Activated B cell treated with CpG ODN at 0.5 μM for 24 hours (primary cell): ENCODE measurements at regions of chr1 and their contacts with region 1.

Region 1: DNA sequence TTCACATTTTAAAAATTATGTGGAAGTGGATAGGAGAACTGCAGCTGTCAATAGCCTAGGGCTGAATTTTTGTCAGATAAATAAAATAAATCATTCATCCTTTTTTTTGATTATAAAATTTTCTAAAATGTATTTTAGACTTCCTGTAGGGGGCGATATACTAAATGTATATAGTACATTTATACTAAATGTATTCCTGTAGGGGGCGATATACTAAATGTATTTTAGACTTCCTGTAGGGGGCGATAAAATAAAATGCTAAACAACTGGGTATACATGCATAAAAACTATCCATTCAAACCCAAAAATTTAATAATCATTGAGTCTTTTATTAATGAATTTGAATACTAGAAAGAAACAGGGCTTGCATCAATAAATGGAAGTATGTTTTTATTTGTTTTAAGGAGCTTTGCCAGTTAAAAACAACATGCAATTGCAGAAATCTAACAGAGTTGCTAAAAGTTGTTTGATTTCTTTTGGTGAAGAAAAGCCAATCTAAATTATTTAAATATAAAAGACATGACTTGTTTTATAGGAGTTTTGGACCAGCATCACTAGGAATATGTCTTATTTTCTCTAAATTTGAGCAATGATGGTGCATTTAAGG is 31.4 kb downstream of the CLCA1 start:
- DNase-seq: no peak
- ATAC-seq: peak; percentile 56
- H3K4me3 Mint-ChIP-seq: no peak overlapping the region
- H3K27ac Mint-ChIP-seq: no peak overlapping the region
- H3K4me1 Mint-ChIP-seq: peaks cover 2% of the 10 kb centered on the region
- H3K27me3 Mint-ChIP-seq: peaks cover 15% of the 10 kb centered on the region
- CTCF ChIP-seq: peak; percentile 100

Region 2: DNA sequence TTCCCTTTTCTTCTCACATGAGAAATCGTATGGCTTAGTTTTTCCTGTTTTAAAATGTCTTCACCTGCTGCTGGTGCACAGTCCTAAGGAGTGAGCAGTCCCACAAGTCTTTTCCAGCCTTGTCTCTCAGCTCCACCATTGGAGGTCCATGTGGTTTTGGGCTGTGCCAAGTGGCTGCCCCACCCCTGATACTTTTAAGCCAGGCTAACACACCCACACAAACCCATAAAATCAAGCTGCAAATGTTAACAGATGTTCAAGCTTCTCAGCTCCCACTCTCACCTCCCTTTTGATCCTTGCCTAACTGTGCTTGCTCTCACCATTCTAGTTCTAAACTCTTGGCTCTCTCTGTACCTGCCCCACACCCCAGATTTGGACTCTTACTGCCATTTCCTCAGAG is 269.0 kb before region 1 on chr1:
- CTCF ChIA-PET with region 1: no interaction called
- POLR2A ChIA-PET with region 1: no interaction called
- intact Hi-C with region 1: no loop called
- DNase-seq: no peak
- ATAC-seq: no peak
- H3K4me3 Mint-ChIP-seq: no peak overlapping the region
- H3K27ac Mint-ChIP-seq: no peak overlapping the region
- H3K4me1 Mint-ChIP-seq: no peaks in the 10 kb centered on the region
- H3K27me3 Mint-ChIP-seq: no peaks in the 10 kb centered on the region
- CTCF ChIP-seq: no peak

Region 3: DNA sequence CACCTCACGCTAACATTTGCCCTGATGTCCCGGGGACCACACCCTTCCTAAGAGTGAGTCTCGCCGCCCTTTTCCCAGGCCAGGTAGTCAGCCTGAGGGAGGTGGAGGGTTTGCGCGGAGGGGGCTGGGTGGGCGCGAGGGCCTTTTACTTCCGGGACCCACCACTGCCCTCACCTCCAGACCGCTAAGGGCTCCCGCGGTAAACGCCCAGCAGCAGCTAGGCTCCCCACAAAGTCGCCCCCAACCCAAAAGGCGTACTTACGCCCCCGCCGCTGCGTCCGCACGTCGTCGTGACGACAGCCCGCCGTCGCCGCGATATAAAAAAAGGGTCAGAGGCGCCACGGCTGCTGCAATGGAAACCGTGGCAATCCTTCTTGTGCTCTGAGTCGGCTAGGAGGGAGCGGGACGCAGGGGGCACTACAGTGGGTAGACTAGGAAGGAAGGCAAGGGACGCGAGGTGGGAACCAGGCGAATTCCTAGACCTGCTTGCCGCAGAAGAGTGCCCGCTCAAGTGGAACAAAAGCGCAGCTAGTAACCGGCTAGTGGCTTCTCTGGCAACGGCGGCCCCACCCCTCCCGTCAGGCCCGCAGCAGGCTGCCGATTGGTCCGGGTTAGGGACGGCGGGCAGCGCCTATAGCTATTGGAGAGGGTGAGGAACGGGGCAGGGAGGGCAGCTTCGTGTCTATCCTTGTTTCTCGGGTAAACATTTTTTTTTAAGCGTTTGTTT is 104.2 kb before region 1 on chr1 and contains the start of gene ODF2L:
- CTCF ChIA-PET with region 1: interaction called, 6 read pairs
- POLR2A ChIA-PET with region 1: no interaction called
- intact Hi-C with region 1: loop called (anchors 1 kb)
- DNase-seq: peak; percentile 78
- ATAC-seq: peak; percentile 99
- H3K4me3 Mint-ChIP-seq: peak within 1 kb of the TSS; percentile 98
- H3K27ac Mint-ChIP-seq: peak within 1 kb of the TSS; percentile 95
- H3K4me1 Mint-ChIP-seq: peaks cover 45% of the 10 kb centered on the region
- H3K27me3 Mint-ChIP-seq: no peaks in the 10 kb centered on the region
- CTCF ChIP-seq: no peak
- total RNA-seq, gene ODF2L: 28.2 and 36.1 TPM in 2 replicates

Region 4: GRCh38 chr1:86419277-86419903 is 80.7 kb before region 1 on chr1:
- CTCF ChIA-PET with region 1: interaction called, 4 read pairs
- POLR2A ChIA-PET with region 1: no interaction called
- intact Hi-C with region 1: loop called (anchors 1 kb)
- DNase-seq: no peak
- ATAC-seq: peak; percentile 81
- H3K4me3 Mint-ChIP-seq: peak overlapping the region; percentile 80
- H3K27ac Mint-ChIP-seq: peak overlapping the region; percentile 70
- H3K4me1 Mint-ChIP-seq: peaks cover 7% of the 10 kb centered on the region
- H3K27me3 Mint-ChIP-seq: peaks cover 3% of the 10 kb centered on the region
- CTCF ChIP-seq: no peak

Region 5: DNA sequence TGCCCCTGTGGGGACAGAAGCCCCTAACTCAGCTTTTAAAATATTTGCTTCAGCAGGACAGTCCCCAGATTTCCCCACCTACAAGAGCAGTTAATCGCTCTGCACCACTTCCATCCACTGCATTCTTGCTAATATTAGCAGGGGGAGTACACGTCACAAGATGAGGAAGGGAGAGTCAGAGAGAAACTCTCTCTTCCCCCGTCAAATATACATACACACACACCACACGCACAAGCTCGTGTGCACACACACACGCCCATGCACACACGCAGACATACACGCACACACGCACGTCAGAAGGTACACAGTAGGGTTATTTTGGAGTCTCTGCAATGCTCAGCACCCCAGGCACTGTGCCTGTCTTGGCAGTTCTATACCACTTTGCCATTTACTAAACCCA is 29.2 kb before region 1 on chr1:
- CTCF ChIA-PET with region 1: interaction called, 7 read pairs
- POLR2A ChIA-PET with region 1: no interaction called
- intact Hi-C with region 1: loop called (anchors 1 kb)
- DNase-seq: no peak
- ATAC-seq: peak; percentile 56
- H3K4me3 Mint-ChIP-seq: no peak overlapping the region
- H3K27ac Mint-ChIP-seq: peak overlapping the region; percentile 6
- H3K4me1 Mint-ChIP-seq: peaks cover 6% of the 10 kb centered on the region
- H3K27me3 Mint-ChIP-seq: peaks cover 18% of the 10 kb centered on the region
- CTCF ChIP-seq: no peak

Region 6: GRCh38 chr1:86542626-86543025 is 42.5 kb after region 1 on chr1:
- CTCF ChIA-PET with region 1: no interaction called
- POLR2A ChIA-PET with region 1: no interaction called
- intact Hi-C with region 1: no loop called
- DNase-seq: no peak
- ATAC-seq: no peak
- H3K4me3 Mint-ChIP-seq: no peak overlapping the region
- H3K27ac Mint-ChIP-seq: no peak overlapping the region
- H3K4me1 Mint-ChIP-seq: no peaks in the 10 kb centered on the region
- H3K27me3 Mint-ChIP-seq: peaks cover 14% of the 10 kb centered on the region
- CTCF ChIP-seq: no peak

Region 7: DNA sequence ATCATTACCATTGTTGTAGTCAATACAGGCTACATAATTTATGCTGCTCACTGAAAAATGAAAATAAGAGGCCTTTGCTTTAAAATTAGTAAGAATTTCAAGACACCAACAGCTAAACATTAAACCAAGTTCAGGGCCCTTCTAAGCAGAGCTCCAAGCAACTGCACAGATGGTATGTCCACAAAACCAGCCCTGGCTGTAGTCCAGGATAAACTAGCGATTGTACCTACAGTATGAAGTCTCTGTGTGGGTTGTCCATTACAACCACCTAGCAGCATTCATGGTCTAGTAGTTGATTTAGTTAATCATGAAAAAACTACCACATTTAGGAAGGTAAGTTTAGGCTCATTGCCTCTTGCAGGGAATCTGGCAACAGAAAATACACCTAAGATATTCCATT is 82.1 kb after region 1 on chr1:
- CTCF ChIA-PET with region 1: no interaction called
- POLR2A ChIA-PET with region 1: no interaction called
- intact Hi-C with region 1: no loop called
- DNase-seq: no peak
- ATAC-seq: no peak
- H3K4me3 Mint-ChIP-seq: no peak overlapping the region
- H3K27ac Mint-ChIP-seq: no peak overlapping the region
- H3K4me1 Mint-ChIP-seq: no peaks in the 10 kb centered on the region
- H3K27me3 Mint-ChIP-seq: no peaks in the 10 kb centered on the region
- CTCF ChIP-seq: no peak

Region 8: DNA sequence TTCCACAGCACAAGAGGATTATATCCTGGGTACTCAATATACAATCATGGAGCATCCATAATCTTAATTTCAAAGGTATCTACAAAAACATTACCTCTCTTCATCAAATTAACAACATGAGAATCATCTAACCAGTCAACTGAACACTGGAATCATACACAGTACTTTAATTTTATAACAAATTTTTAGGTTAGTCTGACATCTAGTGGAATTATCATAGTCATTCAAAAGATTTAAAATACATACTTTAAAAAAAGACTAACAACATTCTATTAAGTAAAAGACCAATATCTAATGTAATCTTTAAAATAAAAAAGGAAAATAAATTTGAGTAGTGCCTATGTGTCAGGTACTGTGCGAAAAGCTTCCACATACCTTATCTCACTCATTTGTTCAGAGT is 187.5 kb after region 1 on chr1:
- CTCF ChIA-PET with region 1: interaction called, 4 read pairs
- POLR2A ChIA-PET with region 1: no interaction called
- intact Hi-C with region 1: loop called (anchors 5 kb)
- DNase-seq: no peak
- ATAC-seq: peak; percentile 34
- H3K4me3 Mint-ChIP-seq: no peak overlapping the region
- H3K27ac Mint-ChIP-seq: no peak overlapping the region
- H3K4me1 Mint-ChIP-seq: no peaks in the 10 kb centered on the region
- H3K27me3 Mint-ChIP-seq: no peaks in the 10 kb centered on the region
- CTCF ChIP-seq: no peak

Region 9: DNA sequence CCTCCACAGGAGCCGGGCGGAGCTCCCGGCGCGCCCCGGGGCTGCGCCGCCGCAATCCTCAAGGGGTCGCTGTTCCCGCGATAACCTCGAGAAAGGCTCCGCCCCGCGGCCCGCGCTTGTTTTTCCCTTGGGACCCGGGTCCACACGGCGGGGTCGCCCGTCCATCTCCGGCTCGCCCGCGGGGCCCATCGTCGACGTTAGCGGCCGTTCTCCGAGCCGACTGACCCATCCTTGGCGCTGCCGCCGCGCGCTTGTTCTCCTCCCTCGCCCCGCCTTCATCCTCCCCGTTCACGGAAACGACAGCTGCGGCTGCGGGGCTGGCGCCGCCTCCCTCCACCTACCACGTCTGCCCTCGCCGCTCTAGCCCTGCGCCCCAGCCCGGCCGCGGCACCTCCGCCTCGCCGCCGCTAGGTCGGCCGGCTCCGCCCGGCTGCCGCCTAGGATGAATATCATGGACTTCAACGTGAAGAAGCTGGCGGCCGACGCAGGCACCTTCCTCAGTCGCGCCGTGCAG is 204.4 kb after region 1 on chr1 and contains the start of gene SH3GLB1:
- CTCF ChIA-PET with region 1: interaction called, 6 read pairs
- POLR2A ChIA-PET with region 1: no interaction called
- intact Hi-C with region 1: loop called (anchors 5 kb)
- DNase-seq: peak; percentile 92
- ATAC-seq: peak; percentile 87
- H3K4me3 Mint-ChIP-seq: peak within 1 kb of the TSS; percentile 99
- H3K27ac Mint-ChIP-seq: peak within 1 kb of the TSS; percentile 99
- H3K4me1 Mint-ChIP-seq: peaks cover 46% of the 10 kb centered on the region
- H3K27me3 Mint-ChIP-seq: no peaks in the 10 kb centered on the region
- CTCF ChIP-seq: peak; percentile 26
- total RNA-seq, gene SH3GLB1: 63.8 and 63.9 TPM in 2 replicates

Region 10: GRCh38 chr1:86741947-86742572 is 242.0 kb after region 1 on chr1:
- CTCF ChIA-PET with region 1: interaction called, 3 read pairs
- POLR2A ChIA-PET with region 1: no interaction called
- intact Hi-C with region 1: loop called (anchors 1 kb)
- DNase-seq: no peak
- ATAC-seq: no peak
- H3K4me3 Mint-ChIP-seq: no peak overlapping the region
- H3K27ac Mint-ChIP-seq: no peak overlapping the region
- H3K4me1 Mint-ChIP-seq: peaks cover 2% of the 10 kb centered on the region
- H3K27me3 Mint-ChIP-seq: no peaks in the 10 kb centered on the region
- CTCF ChIP-seq: peak; percentile 73